ENCODE measurements at regions of chr22 and their contacts with region 1.

Region 1: DNA sequence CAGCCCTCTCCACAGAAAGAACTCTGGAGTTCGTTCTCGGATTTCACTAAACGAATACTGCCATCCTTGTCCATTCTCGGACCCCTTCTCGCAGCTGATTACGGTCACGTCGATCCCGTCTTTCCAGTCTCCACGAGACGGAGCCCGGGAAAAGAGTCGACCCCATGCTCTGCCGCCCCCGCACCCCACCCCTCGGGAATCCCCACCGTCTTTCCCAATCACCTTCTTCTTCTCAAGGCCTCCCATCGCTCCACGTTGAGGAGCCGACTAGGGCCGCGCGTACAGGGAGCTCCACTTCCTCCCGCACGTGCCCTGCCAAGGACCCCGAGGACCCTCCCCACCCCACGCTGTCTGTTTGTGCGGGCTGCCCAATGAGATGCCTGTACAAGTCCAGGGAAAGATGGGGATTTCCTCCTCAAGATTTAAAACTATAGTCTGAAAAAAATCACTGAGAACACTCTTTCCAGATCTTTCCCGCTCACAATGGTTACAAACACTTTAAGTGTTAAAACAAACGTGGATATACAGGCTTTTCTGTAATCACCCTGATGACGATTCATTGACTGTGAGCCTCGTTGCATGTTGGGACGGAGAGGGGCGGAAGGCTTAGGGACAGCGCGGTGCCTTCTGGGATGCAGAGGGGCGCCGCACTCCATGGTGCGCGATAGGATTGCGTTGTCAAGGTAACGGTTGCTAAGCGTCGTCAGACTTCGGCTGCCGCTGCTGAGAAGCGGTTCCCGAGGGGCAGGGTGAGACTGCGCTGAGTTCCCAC is at the start of gene PES1:
- DNase-seq: peak; percentile 95 to 97
- H3K4me3 ChIP-seq: peak within 1 kb of the TSS; percentile 77
- H3K4me3 Mint-ChIP-seq: no peak within 1 kb of the TSS
- H3K27ac Mint-ChIP-seq: no peak within 1 kb of the TSS
- H3K4me1 ChIP-seq: peaks cover 8% of the 10 kb centered on the region
- H3K4me1 Mint-ChIP-seq: no peaks in the 10 kb centered on the region
- H3K27me3 ChIP-seq: no peaks in the 10 kb centered on the region
- H3K27me3 Mint-ChIP-seq: peaks cover 4% of the 10 kb centered on the region
- CTCF ChIP-seq: no peak
- total RNA-seq, gene PES1: 110 and 117 TPM in 2 replicates

Region 2: GRCh38 chr22:30574997-30575671 is 16.6 kb before region 1 on chr22:
- CTCF ChIA-PET with region 1: interaction called, 3 read pairs
- POLR2A ChIA-PET with region 1: interaction called, 6 read pairs
- intact Hi-C with region 1: loop called (anchors 1 kb)
- DNase-seq: peak in 1 of 2 experiments; percentile 43
- H3K4me3 ChIP-seq: peak overlapping the region; percentile 44
- H3K4me3 Mint-ChIP-seq: peak overlapping the region; percentile 69
- H3K27ac Mint-ChIP-seq: no peak overlapping the region
- H3K4me1 ChIP-seq: peaks cover 31% of the 10 kb centered on the region
- H3K4me1 Mint-ChIP-seq: peaks cover 19% of the 10 kb centered on the region
- H3K27me3 ChIP-seq: no peaks in the 10 kb centered on the region
- H3K27me3 Mint-ChIP-seq: no peaks in the 10 kb centered on the region
- CTCF ChIP-seq: peak in 1 of 2 experiments; percentile 41

Region 3: DNA sequence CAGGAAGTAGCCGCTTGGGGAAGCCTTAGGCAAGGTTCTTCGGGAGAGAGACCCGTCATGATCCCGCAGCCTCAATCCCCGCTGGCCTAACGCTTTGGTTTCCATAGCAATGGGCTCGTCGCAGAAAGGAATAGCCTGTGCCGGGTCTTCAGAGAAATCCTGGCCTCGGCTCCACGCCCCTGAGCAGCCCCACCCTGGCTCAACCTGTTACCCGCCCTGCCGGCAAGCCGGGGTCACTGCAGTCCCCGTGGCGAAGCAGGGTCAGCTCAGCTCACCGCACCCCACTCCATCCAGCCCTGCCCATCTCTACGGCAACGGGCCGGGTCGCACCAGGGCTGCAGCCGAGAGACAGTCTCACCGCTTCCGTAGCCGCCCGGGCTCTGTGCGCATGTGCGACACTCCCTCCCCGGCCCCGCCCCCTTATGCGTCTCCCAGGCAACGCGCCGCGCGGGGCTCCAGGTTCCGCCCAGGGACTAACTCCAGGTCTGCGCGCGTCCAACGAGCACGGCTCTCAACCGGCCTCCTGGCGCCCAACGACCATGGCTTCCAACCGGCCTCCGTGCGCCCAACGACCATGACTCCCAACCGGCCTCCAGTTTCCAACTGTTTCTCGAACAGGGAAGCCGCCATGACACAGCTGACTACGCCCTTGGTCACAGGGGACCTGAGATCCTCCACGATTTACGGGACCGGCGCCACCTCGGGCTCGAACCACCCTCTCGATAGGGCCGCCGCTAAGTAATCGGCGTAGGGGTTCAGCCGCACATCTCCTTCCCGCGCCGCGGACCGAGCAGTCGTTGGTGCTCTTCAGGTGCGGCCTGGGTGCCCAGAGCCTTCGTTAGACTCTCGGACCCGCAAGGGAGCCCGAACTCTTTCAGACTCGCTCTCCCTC is 76.0 kb after region 1 on chr22 and contains the start of gene DUSP18:
- CTCF ChIA-PET with region 1: interaction called, 3 read pairs
- POLR2A ChIA-PET with region 1: interaction called, 16 read pairs
- intact Hi-C with region 1: no loop called
- DNase-seq: peak; percentile 93 to 96
- H3K4me3 ChIP-seq: peak within 1 kb of the TSS; percentile 86
- H3K4me3 Mint-ChIP-seq: peak within 1 kb of the TSS; percentile 94
- H3K27ac Mint-ChIP-seq: peak within 1 kb of the TSS; percentile 86
- H3K4me1 ChIP-seq: peaks cover 4% of the 10 kb centered on the region; the same call in 1 of the 2 replicates
- H3K4me1 Mint-ChIP-seq: peaks cover 17% of the 10 kb centered on the region
- H3K27me3 ChIP-seq: no peaks in the 10 kb centered on the region; the same call in 1 of the 2 replicates
- H3K27me3 Mint-ChIP-seq: no peaks in the 10 kb centered on the region
- CTCF ChIP-seq: peak; percentile 40 to 51
- total RNA-seq, gene DUSP18: 6.0 and 7.9 TPM in 2 replicates